A673 (cell line): ENCODE measurements at regions of chr7 and their contacts with region 1.

Region 1: GRCh38 chr7:107743567-107744344 is at the start of gene CBLL1:
- DNase-seq: peak; percentile 98
- H3K4me3 ChIP-seq: peak within 1 kb of the TSS; percentile 80
- H3K27ac ChIP-seq: peak within 1 kb of the TSS; percentile 97
- H3K4me1 ChIP-seq: peaks cover 23% of the 10 kb centered on the region
- H3K27me3 ChIP-seq: no peaks in the 10 kb centered on the region
- CTCF ChIP-seq: peak; percentile 86
- total RNA-seq, gene CBLL1: 30.8 and 37.9 TPM in 2 replicates

Region 2: GRCh38 chr7:107711301-107711700 is 32.5 kb before region 1 on chr7:
- CTCF ChIA-PET with region 1: no interaction called
- POLR2A ChIA-PET with region 1: no interaction called
- intact Hi-C with region 1: no loop called
- DNase-seq: no peak
- H3K4me3 ChIP-seq: no peak overlapping the region
- H3K27ac ChIP-seq: no peak overlapping the region
- H3K4me1 ChIP-seq: no peaks in the 10 kb centered on the region
- H3K27me3 ChIP-seq: peaks cover 9% of the 10 kb centered on the region
- CTCF ChIP-seq: no peak

Region 3: GRCh38 chr7:107758667-107759066 is 14.9 kb after region 1 on chr7:
- CTCF ChIA-PET with region 1: no interaction called
- POLR2A ChIA-PET with region 1: no interaction called
- intact Hi-C with region 1: loop called (anchors 2 kb)
- DNase-seq: no peak
- H3K4me3 ChIP-seq: no peak overlapping the region
- H3K27ac ChIP-seq: no peak overlapping the region
- H3K4me1 ChIP-seq: no peaks in the 10 kb centered on the region
- H3K27me3 ChIP-seq: no peaks in the 10 kb centered on the region
- CTCF ChIP-seq: no peak